ENCODE measurements at regions of chr14 and their contacts with region 1.

Region 1: DNA sequence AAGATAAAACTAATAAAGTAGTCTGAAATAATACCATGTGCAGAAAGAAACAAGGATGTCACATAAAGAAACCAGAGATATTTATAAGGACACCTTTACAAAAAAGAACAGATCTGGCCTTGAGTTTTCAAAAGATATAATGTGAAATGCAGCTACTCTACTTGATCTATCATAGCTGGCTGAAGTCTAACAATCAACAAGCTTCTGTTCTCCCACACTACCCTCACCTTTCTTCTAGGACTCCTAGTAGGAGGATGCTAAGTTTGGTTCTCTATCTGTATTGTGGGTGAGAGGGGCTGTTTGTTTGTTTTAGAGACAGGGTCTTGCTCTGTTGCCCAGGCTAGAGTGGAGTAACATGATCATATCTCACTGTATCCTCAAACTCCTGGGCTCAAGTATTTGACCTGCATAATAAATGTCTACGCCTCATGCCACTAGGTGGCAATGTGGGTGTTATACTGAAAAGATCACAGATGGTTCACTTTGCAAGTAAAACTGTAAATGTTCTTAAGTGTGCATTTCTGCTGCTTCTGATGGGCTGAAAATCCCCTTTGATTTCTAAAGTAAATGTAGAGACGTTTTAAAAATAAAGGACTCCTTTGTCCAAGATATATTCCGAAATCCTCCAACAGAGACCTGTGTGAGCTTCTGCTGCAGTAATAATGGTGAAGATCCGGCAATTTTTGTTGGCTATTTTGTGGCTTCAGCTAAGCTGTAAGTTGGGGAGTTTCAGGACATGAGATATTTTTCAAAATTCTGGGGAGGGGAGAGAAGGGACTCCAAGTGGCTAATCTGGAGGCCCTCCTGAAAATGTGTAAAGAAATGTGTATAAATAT is 269.3 kb downstream of the DAD1 start:
- DNase-seq: peak; percentile 30

Region 2: DNA sequence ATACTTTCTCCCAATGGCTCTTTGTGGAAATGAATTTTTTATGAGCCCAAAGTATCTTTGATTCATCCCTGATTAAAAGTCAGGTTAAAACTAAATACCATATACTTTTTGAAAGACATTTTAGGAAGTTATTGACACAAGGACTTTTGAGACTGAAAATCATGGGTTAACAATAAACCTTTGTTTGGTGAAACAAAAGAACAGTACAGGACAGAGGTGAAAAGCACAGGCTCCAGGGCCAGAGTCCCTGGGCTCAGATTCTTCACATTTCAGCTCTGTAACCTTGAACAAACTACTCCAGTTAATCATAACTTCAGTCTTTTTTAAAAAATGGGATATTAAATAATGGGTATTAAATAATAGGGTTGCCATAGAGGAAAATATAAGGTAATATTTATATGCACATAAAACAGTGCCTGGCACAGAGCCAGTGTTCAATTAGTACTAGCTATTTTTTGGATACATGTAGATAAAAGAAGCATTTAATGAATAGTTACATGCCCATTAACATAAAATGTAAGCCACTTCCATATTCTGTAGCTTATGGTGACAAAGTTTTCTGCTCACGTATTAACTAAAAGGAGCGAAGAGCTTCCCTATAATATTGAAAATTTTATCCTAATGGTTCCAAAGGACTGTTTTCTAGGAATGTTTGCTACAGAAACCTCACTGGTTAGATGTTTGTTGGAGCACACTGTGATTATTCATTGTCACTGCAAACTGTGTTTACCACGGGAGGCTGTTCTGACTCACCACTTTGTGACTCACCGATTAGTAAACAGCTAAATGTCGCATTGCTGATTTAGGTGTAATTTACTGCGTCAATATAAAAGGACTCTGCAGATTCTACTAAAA is 13.9 kb after region 1 on chr14:
- CTCF ChIA-PET with region 1: interaction called, 16 read pairs
- POLR2A ChIA-PET with region 1: no interaction called
- DNase-seq: no peak

Region 3: GRCh38 chr14:22375321-22375930 is 55.7 kb after region 1 on chr14:
- CTCF ChIA-PET with region 1: interaction called, 48 read pairs
- POLR2A ChIA-PET with region 1: interaction called, 3 read pairs
- DNase-seq: peak; percentile 33

Measured in HEK293T (cell line).